BJ (cell line): ENCODE measurements at regions of chr15 and their contacts with region 1.

Region 1: GRCh38 chr15:90931737-90932659 is at the start of gene HDDC3:
- DNase-seq: no peak
- H3K4me3 ChIP-seq: peak within 1 kb of the TSS; percentile 65
- H3K27me3 ChIP-seq: no peaks in the 10 kb centered on the region
- CTCF ChIP-seq: peak; percentile 94
- polyA plus RNA-seq, gene HDDC3: 12.3 and 12.4 TPM in 2 replicates

Region 2: DNA sequence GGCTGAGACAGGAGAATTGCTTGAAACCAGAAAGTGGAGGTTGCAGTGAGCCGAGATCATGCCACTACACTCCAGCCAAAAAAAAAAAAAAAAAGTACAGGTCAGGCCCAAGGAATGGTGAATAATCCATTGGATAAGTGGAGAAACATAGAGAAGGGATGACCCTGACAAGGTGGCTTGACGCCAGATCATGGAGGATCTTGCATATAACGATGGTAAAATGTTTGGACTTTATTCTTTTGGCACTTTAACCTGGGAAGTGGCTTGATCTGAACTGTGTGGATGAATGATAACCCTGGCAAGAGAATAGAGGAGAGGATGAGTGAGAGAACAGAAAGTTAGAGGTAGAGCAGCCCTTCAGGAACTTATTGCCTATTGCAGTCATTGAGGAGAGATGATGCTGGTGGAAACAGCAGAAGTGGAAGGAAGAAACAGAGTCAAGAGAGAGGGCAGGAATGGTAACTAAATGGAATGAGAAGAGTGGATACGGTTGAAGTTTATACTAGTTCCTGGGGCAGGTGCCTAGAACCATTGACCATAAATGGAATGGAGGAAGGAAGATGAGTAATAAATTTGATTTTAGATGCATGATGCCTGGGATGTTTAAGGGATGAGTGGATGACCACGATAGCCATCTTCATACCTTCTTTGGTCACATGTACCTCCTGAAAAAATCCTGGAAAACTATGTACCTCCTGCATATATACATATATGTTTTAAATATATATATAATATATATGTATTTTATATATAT is 157.1 kb before region 1 on chr15:
- CTCF ChIA-PET with region 1: no interaction called
- POLR2A ChIA-PET with region 1: no interaction called
- DNase-seq: peak; percentile 32
- H3K4me3 ChIP-seq: no peak overlapping the region
- H3K27me3 ChIP-seq: no peaks in the 10 kb centered on the region
- CTCF ChIP-seq: no peak

Region 3: DNA sequence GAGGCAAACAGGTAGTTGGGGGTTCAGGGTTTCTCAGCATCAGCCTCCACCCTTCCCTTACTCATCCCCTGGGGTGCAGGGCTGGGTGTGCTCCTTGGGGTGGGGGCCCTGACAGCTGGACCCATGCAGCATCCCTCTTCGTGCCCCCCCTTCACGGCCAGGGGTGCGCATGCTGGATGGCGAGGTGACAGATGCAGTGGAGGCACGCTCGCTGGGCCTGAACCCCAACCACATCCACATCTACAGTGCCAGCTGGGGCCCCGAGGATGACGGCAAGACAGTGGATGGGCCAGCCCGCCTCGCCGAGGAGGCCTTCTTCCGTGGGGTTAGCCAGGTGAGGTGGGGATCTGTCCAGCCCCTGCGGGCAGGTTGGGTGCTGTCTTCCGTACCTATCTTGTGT is 54.0 kb before region 1 on chr15:
- CTCF ChIA-PET with region 1: no interaction called
- POLR2A ChIA-PET with region 1: no interaction called
- DNase-seq: no peak
- H3K4me3 ChIP-seq: no peak overlapping the region
- H3K27me3 ChIP-seq: no peaks in the 10 kb centered on the region
- CTCF ChIP-seq: no peak

Region 4: GRCh38 chr15:90902040-90902839 is 29.8 kb before region 1 on chr15:
- CTCF ChIA-PET with region 1: interaction called, 94 read pairs
- POLR2A ChIA-PET with region 1: no interaction called
- DNase-seq: peak; percentile 35
- H3K4me3 ChIP-seq: peak overlapping the region; percentile 68
- H3K27me3 ChIP-seq: no peaks in the 10 kb centered on the region
- CTCF ChIP-seq: peak; percentile 92

Region 5: DNA sequence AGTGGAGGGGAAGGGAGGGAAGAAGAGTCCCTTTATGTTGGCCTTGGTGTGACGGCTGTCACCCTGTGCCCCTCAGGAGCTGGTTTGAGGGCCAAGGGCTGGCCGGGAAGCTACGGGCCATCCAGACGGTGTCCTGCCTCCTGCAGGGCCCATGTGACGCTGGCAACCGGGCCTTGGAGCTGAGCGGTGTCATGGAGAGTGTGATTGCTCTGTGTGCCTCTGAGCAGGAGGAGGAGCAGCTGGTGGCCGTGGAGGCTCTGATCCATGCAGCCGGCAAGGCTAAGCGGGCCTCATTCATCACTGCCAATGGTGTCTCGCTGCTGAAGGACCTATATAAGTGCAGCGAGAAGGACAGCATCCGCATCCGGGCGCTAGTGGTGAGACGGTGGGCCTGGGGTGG is 14.5 kb after region 1 on chr15:
- CTCF ChIA-PET with region 1: interaction called, 87 read pairs
- POLR2A ChIA-PET with region 1: interaction called, 24 read pairs
- DNase-seq: no peak
- H3K4me3 ChIP-seq: no peak overlapping the region
- H3K27me3 ChIP-seq: no peaks in the 10 kb centered on the region
- CTCF ChIP-seq: no peak

Region 6: DNA sequence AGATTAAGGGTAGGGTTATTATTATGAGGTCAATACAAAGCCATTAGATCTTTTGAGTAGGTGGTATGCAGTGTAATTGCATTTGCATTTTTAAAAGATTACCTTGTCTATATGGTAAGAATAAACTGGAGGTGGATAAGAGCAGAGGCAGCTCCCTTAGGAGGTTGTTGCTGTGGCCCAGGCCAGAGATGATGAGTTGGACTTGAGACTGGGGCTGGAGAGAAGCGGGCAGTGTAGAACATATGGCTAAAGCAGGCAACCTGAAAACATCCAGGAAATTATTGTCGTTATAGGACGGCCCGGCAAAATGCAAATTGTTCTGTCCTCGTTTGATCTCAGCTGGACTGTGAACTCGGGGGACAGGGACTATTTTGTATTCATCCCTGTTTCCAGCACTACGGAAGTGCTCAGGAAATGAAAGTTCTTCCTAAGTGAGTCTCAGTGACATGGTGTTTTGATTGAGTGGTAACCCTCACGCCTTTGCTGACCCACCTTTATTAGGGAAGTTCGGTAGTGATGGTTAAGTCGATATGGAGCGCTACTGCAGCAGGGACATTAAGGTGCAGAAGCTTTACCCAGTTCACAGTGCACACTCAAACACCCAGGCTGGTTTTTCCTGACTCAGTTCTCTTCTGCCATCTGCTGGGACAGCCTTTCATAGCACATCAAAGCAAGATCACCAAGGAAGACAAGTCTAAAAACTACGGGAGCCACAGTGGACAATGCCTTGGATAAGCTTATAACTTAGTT is 117.6 kb after region 1 on chr15:
- CTCF ChIA-PET with region 1: interaction called, 15 read pairs
- POLR2A ChIA-PET with region 1: no interaction called
- DNase-seq: no peak
- H3K4me3 ChIP-seq: no peak overlapping the region
- H3K27me3 ChIP-seq: no peaks in the 10 kb centered on the region; the same call in 1 of the 2 replicates
- CTCF ChIP-seq: peak; percentile 84